HEK293T (cell line): ENCODE measurements at regions of chr6 and their contacts with region 1.

Region 1: GRCh38 chr6:111709615-111710398 is 104.1 kb upstream of the TRAF3IP2 start:
- DNase-seq: peak; percentile 79

Region 2: GRCh38 chr6:112043032-112044007 is 333.5 kb after region 1 on chr6:
- CTCF ChIA-PET with region 1: interaction called, 12 read pairs
- POLR2A ChIA-PET with region 1: no interaction called
- DNase-seq: peak; percentile 96

Region 3: DNA sequence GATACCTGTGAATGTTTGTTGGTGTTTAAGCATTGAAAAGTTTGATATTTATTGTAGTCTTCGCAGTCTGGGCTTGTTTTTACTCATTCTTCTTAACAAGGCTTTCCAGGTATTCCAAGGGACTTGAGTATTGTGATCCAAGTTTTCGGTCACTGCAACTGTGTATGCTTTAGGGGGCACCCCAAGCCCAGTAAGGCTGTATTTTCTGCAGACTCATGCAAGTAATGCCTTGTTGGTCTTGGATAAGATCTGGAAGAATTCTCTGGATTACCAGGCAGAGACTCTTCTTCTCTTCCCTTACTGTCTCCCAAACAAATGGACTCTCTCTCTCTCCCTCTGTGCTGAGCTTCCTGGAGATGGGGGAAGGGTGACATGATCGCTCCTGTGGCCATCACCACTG is 719.4 kb after region 1 on chr6:
- CTCF ChIA-PET with region 1: no interaction called
- POLR2A ChIA-PET with region 1: no interaction called
- DNase-seq: no peak